T-cell (primary cell): ENCODE measurements at regions of chr12 and their contacts with region 1.

Region 1: GRCh38 chr12:9741726-9742125 is 8.8 kb upstream of the CLECL1 start:
- DNase-seq: peak in 34 of 35 experiments; percentile 46 to 93 (median 79)
- ATAC-seq: peak; percentile 77 to 84 (median 80)
- H3K4me3 ChIP-seq: peak overlapping the region in 1 of 2 donors; percentile 17
- H3K4me3 Mint-ChIP-seq: peak overlapping the region; percentile 70 to 79 (median 72)
- H3K27ac ChIP-seq: peak overlapping the region; percentile 94
- H3K27ac Mint-ChIP-seq: peak overlapping the region; percentile 90 to 98
- H3K4me1 ChIP-seq: peaks cover 35 to 41% of the 10 kb centered on the region in 2 experiments
- H3K4me1 Mint-ChIP-seq: peaks cover 65 to 72% (median 69%) of the 10 kb centered on the region in 3 donors
- H3K27me3 ChIP-seq: no peaks in the 10 kb centered on the region
- H3K27me3 Mint-ChIP-seq: no peaks in the 10 kb centered on the region

Region 2: DNA sequence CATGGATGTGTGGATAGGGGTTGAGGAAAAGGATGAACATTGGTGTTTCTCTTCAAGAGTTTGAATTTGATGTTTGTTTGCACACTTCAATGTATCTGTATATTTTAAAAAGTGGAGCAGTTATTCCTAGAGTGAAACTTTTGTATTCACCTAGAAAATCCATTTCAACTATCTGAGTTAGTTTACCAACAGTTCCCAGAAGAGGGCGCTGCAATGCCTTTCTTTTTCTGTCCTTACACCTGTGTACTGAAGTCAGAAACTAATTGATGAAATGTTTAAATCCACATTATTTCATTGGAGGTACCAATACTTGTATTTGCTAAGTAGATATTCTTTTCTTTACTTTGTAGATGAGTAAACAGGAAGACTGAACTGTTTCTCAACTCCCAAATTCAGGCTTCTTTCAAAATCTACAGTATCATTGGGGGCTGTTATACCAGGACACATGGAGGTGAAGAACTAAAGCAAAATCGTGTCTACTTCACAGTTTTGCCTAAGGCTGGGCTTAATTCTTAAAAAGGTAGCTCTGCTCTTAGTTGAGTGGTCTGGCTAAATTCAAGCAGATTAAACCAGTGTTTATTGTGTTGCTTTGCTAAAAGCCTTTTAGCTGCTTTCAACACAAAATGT is 107.4 kb before region 1 on chr12:
- CTCF ChIA-PET with region 1: interaction called, 5 to 26 read pairs
- POLR2A ChIA-PET with region 1: interaction called in 1 of 2 experiments, 3 read pairs
- DNase-seq: peak; percentile 48 to 91 (median 74)
- ATAC-seq: peak; percentile 79 to 90 (median 82)
- H3K4me3 ChIP-seq: no peak overlapping the region
- H3K4me3 Mint-ChIP-seq: peak overlapping the region; percentile 17 to 54 (median 28)
- H3K27ac ChIP-seq: peak overlapping the region; percentile 48
- H3K27ac Mint-ChIP-seq: peak overlapping the region; percentile 74 to 95
- H3K4me1 ChIP-seq: peaks cover 24 to 25% of the 10 kb centered on the region in 2 experiments
- H3K4me1 Mint-ChIP-seq: peaks cover 76 to 91% (median 77%) of the 10 kb centered on the region in 3 donors
- H3K27me3 ChIP-seq: no peaks in the 10 kb centered on the region
- H3K27me3 Mint-ChIP-seq: no peaks in the 10 kb centered on the region

Region 3: GRCh38 chr12:9669534-9669933 is 72.2 kb before region 1 on chr12 and contains the start of gene CLEC2D:
- CTCF ChIA-PET with region 1: interaction called, 4 to 15 read pairs
- POLR2A ChIA-PET with region 1: interaction called, 3 to 4 read pairs
- DNase-seq: peak in 9 of 35 experiments; percentile 19 to 76 (median 36)
- ATAC-seq: peak; percentile 44 to 57 (median 54)
- H3K4me3 ChIP-seq: peak within 1 kb of the TSS; percentile 69 to 77
- H3K4me3 Mint-ChIP-seq: peak within 1 kb of the TSS; percentile 85 to 90 (median 89)
- H3K27ac ChIP-seq: peak within 1 kb of the TSS; percentile 74
- H3K27ac Mint-ChIP-seq: peak within 1 kb of the TSS; percentile 83 to 95
- H3K4me1 ChIP-seq: peaks cover 39 to 47% of the 10 kb centered on the region in 2 experiments
- H3K4me1 Mint-ChIP-seq: peaks cover 66 to 70% (median 66%) of the 10 kb centered on the region in 3 donors
- H3K27me3 ChIP-seq: no peaks in the 10 kb centered on the region
- H3K27me3 Mint-ChIP-seq: no peaks in the 10 kb centered on the region
- total RNA-seq, gene CLEC2D: 217 to 338 (median 311) TPM

Region 4: GRCh38 chr12:9707864-9708808 is 33.6 kb before region 1 on chr12:
- CTCF ChIA-PET with region 1: interaction called, 5 to 21 read pairs
- POLR2A ChIA-PET with region 1: interaction called in 1 of 2 experiments, 5 read pairs
- DNase-seq: peak; percentile 47 to 86 (median 68)
- ATAC-seq: peak; percentile 75 to 84 (median 82)
- H3K4me3 ChIP-seq: peak overlapping the region in 1 of 2 donors; percentile 29
- H3K4me3 Mint-ChIP-seq: peak overlapping the region; percentile 54 to 82 (median 59)
- H3K27ac ChIP-seq: peak overlapping the region; percentile 84
- H3K27ac Mint-ChIP-seq: peak overlapping the region; percentile 93 to 96
- H3K4me1 ChIP-seq: peaks cover 19 to 25% of the 10 kb centered on the region in 2 experiments
- H3K4me1 Mint-ChIP-seq: peaks cover 58 to 79% (median 65%) of the 10 kb centered on the region in 3 donors
- H3K27me3 ChIP-seq: no peaks in the 10 kb centered on the region
- H3K27me3 Mint-ChIP-seq: no peaks in the 10 kb centered on the region

Region 5: DNA sequence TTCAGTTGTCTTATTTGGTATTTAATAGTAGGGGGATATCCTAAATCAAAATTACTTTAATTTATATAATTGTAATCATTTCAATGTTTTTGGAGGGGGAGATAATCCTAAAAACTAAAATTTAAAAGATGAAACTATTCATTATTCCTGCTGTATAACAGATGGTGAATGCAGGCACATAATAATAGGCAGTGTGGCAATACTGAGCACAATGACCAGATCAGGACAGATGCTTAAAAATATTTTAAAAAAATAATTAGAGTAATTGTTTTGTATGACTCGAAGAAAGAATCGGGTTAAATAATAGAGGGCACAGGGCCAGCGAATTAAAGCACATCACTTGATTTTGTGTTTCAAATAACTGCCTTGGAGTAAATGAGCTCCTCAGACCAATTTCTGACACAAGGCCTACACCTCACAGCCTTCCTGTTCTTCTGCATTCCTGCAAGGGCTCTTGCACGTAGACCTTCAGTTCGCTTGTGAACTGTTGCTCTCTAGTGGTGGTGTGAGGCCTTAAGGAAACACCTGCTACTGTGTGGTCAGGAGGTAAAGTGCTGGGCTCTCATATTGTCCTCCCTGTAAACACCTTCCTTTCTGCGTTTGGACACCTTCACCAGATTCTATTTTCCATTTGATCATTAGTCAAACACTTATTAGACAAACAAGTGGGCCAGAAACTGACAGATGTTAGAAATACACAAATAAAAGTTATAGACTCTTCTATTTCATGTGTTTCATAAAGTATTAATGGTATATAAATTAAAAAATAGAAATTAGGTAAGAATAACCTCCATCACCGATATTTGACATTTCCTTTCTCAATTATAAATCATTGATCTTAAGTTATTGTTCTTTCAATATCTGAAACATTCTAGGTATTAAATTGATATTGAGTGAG is 56.2 kb after region 1 on chr12:
- CTCF ChIA-PET with region 1: interaction called, 26 to 127 read pairs
- POLR2A ChIA-PET with region 1: interaction called in 1 of 2 experiments, 6 read pairs
- DNase-seq: peak; percentile 29 to 87 (median 59)
- ATAC-seq: peak; percentile 92 to 98 (median 94)
- H3K4me3 ChIP-seq: no peak overlapping the region
- H3K4me3 Mint-ChIP-seq: peak overlapping the region in 1 of 3 donors; percentile 40
- H3K27ac ChIP-seq: peak overlapping the region; percentile 54
- H3K27ac Mint-ChIP-seq: peak overlapping the region; percentile 24 to 75
- H3K4me1 ChIP-seq: peaks cover 10 to 42% of the 10 kb centered on the region in 2 experiments
- H3K4me1 Mint-ChIP-seq: peaks cover 47 to 51% (median 49%) of the 10 kb centered on the region in 3 donors
- H3K27me3 ChIP-seq: no peaks in the 10 kb centered on the region
- H3K27me3 Mint-ChIP-seq: no peaks in the 10 kb centered on the region

Region 6: DNA sequence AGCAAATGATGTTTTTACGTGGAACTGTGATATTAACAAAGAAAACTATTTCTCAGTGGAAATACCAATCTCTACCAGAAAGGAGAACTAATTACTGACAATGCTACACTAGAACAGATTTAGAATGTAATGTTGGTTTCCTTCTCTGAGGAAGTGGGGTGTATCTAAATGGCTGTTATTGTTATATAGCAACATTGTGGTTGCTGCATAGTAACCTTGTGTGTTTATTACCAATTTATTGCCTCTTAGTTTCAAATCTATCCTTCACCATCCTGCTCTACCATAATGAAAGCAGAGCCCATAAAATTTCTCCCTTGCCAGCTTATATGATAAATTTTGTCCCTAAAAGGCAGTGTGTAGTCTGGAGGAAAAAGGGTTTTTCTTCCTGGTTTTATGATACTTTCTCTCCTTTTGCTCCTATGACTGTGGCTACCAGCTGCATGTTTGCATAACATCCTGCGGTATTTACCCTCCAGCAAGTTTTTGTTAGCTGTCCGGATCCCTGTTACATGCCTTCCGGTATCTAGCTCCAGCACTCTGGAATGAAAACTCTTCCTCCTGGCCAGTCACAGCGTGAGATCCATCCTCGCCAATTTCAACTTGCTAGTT is 653.8 kb after region 1 on chr12:
- CTCF ChIA-PET with region 1: no interaction called
- POLR2A ChIA-PET with region 1: no interaction called
- DNase-seq: peak in 3 of 35 experiments; percentile 16 to 71 (median 36)
- ATAC-seq: peak; percentile 67 to 79 (median 74)
- H3K4me3 ChIP-seq: peak overlapping the region in 1 of 2 donors; percentile 10
- H3K4me3 Mint-ChIP-seq: peak overlapping the region; percentile 25 to 46 (median 34)
- H3K27ac ChIP-seq: peak overlapping the region; percentile 93
- H3K27ac Mint-ChIP-seq: peak overlapping the region; percentile 75 to 94
- H3K4me1 ChIP-seq: peaks cover 21 to 29% of the 10 kb centered on the region in 2 experiments
- H3K4me1 Mint-ChIP-seq: peaks cover 19 to 48% (median 36%) of the 10 kb centered on the region in 3 donors
- H3K27me3 ChIP-seq: no peaks in the 10 kb centered on the region
- H3K27me3 Mint-ChIP-seq: peaks cover 5 to 17% of the 10 kb centered on the region in 2 donors